Activated CD8-positive, alpha-beta T cell treated with anti-CD3 and anti-CD28 coated beads for 36 hours (primary cell): ENCODE measurements at regions of chr1 and their contacts with region 1.

Region 1: DNA sequence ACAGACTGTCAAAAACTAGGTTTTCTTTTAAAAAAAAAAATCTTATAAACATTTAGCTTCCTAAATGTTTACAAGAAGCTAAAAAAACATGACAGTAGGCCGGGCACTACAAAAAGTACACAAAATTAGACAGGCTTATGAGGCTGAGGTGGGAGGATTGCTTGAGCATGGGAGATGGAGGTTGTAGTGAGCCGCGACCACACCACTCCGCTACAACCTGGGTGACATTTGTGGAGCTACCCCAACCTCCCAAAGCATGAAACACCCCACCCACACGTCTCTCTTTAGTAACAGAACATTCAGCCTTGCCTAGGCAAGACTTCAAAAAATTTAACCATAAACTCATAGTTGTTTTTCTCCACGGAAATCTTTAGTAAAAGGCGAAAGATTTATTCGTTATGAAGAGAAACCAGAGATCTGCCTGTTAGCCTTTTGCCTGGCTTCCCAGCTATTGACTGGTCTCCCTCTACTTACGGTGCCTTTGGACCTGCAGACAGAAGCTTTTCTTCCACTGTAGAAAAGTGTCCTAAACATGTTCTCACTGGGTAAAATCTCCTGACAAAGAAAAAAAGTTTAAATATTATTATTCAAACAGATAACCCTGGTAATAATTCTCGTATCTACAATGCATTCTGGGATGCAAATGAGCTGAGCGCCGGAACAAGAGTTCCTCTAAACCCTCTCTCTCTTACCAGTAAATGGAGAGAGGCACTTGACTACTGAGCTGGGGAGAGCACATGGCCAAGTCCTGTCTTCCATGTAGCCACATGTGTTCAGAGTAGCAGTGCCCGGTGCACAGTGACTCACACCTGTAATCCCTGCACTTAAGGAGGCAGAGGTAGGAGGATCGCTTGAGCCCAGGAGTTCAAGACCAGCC is 9.2 kb downstream of the RNU5D-1 start:
- DNase-seq: peak; percentile 95
- ATAC-seq: peak; percentile 78
- H3K4me3 Mint-ChIP-seq: peak overlapping the region; percentile 72
- H3K27ac Mint-ChIP-seq: peak overlapping the region; percentile 92
- H3K4me1 Mint-ChIP-seq: peaks cover 74% of the 10 kb centered on the region
- H3K27me3 Mint-ChIP-seq: peaks cover 4% of the 10 kb centered on the region
- CTCF ChIP-seq: no peak

Region 2: DNA sequence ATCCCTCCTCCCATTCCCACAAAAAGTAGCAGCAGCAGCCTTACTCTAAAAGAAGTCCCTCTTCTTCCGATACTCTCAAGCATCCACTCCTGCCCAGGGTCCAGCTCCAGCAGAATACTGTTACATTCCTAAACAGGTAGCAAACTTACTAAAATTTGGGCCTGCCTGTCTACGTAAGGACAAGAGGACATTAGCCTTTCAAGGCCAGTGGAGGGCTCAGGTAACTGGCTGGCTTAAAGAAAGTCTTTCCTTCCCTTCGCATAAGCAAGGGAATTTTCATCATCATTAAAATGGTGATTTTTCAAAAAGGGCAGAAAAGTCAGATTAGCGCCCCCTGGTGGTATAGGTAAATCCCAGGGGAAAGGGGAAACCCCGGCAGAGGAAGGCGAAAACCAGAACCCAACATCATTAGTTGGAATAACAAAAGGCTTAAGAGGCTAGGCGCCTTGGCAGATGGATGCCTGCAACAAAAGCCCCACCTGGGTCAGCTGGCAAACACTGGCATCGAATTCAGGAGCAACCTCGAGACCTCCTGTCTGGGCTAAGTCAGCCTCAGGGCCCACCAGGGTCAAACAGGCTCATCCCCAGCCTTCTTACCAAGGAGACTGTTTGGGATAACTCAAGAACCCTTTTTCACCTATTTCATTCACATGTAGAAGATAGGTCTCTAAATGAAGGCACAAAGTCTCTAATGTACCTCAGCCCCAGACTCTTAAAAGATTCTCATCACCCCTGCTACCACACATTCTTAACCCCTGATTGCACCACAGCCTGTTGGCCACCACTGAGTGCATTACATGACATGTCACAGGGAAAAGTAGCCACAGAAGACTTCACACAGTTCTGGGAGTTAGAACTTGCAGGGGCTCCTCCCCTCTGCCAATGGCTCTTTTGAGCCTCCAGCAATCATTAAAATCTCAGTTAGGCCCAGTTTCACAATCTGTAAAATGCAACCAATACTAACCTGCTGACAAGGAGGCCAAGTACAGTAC is 403.3 kb before region 1 on chr1:
- CTCF ChIA-PET with region 1: no interaction called
- POLR2A ChIA-PET with region 1: no interaction called
- intact Hi-C with region 1: no loop called
- DNase-seq: peak; percentile 61
- ATAC-seq: no peak
- H3K4me3 Mint-ChIP-seq: no peak overlapping the region
- H3K27ac Mint-ChIP-seq: no peak overlapping the region
- H3K4me1 Mint-ChIP-seq: no peaks in the 10 kb centered on the region
- H3K27me3 Mint-ChIP-seq: no peaks in the 10 kb centered on the region
- CTCF ChIP-seq: peak; percentile 97

Region 3: DNA sequence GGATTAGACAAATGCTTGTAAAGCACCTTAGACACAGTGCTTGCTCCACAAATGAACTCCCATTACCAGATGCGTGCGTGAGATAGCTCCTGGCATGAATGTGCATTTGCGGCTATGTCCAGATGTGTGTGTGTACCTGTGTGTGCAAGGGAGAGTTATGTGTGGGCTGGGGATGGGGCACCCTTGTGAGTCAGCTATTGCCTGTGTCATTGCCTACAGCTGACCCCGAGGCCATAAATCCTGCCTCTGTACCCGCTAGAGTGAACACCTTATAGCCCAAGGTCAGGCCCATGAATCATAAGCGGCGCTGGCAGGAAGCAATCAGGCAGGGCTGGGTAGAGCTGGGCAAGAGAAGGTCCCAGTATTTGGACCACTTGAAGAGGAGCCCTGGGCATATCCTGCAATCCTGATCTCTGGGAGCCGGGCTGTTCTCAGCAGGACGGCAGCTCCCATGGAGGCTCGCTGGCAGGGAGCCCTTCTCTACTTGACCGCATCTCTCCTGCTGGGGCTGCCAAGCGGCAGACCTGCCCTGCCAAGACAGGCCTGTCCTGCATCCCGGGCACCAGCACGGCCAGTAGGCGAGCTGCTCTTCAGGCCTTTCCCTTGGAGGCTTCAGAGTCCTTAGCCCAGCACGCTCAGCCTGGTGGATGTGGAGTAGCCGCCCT is 133.8 kb before region 1 on chr1:
- CTCF ChIA-PET with region 1: no interaction called
- POLR2A ChIA-PET with region 1: no interaction called
- intact Hi-C with region 1: no loop called
- DNase-seq: no peak
- ATAC-seq: no peak
- H3K4me3 Mint-ChIP-seq: no peak overlapping the region
- H3K27ac Mint-ChIP-seq: no peak overlapping the region
- H3K4me1 Mint-ChIP-seq: no peaks in the 10 kb centered on the region
- H3K27me3 Mint-ChIP-seq: no peaks in the 10 kb centered on the region
- CTCF ChIP-seq: no peak

Region 4: DNA sequence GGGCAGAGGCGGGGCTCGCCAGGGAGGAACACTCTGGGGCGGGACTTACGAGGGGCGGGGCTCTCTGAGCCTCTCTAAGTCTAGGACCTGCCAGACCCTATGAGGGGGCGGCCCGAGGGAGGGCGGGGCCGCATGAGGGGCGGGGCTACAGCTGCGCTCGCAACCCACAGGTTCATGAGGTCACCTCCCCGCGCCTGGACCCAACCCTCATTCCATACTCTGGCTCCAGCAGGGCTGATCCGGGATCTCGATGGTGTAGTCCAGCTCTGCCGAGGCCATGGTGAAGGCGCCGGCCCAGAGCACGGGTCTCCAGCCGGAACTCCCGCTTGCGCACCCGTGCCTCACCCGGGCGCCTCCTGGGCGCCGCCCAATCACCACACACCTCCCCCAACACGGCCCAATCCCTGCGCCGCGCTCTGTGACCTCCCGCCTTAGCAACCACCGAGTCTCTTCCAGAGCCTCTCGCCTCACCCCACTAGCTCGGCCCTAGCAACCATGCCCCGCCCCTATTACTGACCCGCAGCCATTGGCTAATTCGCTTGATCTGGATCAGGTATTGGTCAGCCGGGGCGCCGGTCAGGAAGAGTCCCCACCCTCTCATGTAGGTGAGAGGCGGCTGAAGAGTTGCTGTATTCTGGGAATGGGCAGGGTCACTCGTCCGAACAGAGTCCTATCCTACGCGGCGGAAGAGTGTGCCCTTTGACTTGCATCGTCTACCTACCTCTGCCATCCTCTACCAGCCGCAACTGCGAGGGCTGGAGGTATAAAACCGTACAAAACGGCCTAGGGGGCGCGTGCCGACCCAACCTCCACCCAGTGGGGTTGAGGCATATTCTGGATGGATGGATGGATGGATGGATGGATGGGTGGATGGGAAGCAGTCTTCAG is 47.4 kb before region 1 on chr1 and contains the starts of genes ARMH1 and TMEM53:
- CTCF ChIA-PET with region 1: no interaction called
- POLR2A ChIA-PET with region 1: interaction called, 38 read pairs
- intact Hi-C with region 1: no loop called
- DNase-seq: peak; percentile 99
- ATAC-seq: peak; percentile 95
- H3K4me3 Mint-ChIP-seq: peak within 1 kb of the TSS; percentile 81
- H3K27ac Mint-ChIP-seq: peak within 1 kb of the TSS; percentile 89
- H3K4me1 Mint-ChIP-seq: peaks cover 20% of the 10 kb centered on the region
- H3K27me3 Mint-ChIP-seq: no peaks in the 10 kb centered on the region
- CTCF ChIP-seq: no peak
- total RNA-seq, gene ARMH1: 162 to 165 TPM
- total RNA-seq, gene TMEM53: 2.3 to 3.5 TPM

Region 5: GRCh38 chr1:44739361-44740178 is 17.8 kb after region 1 on chr1 and contains the start of gene KIF2C:
- CTCF ChIA-PET with region 1: interaction called, 3 read pairs
- POLR2A ChIA-PET with region 1: interaction called, 553 read pairs
- intact Hi-C with region 1: no loop called
- DNase-seq: peak; percentile 99
- ATAC-seq: peak; percentile 99
- H3K4me3 Mint-ChIP-seq: peak within 1 kb of the TSS; percentile 97
- H3K27ac Mint-ChIP-seq: peak within 1 kb of the TSS; percentile 90
- H3K4me1 Mint-ChIP-seq: peaks cover 15% of the 10 kb centered on the region
- H3K27me3 Mint-ChIP-seq: no peaks in the 10 kb centered on the region
- CTCF ChIP-seq: no peak
- total RNA-seq, gene KIF2C: 92.6 to 95.0 TPM

Region 6: GRCh38 chr1:44780583-44781121 is 58.9 kb after region 1 on chr1:
- CTCF ChIA-PET with region 1: interaction called, 3 read pairs
- POLR2A ChIA-PET with region 1: interaction called, 108 read pairs
- intact Hi-C with region 1: no loop called
- DNase-seq: no peak
- ATAC-seq: no peak
- H3K4me3 Mint-ChIP-seq: no peak overlapping the region
- H3K27ac Mint-ChIP-seq: no peak overlapping the region
- H3K4me1 Mint-ChIP-seq: peaks cover 57% of the 10 kb centered on the region
- H3K27me3 Mint-ChIP-seq: no peaks in the 10 kb centered on the region
- CTCF ChIP-seq: no peak

Region 7: DNA sequence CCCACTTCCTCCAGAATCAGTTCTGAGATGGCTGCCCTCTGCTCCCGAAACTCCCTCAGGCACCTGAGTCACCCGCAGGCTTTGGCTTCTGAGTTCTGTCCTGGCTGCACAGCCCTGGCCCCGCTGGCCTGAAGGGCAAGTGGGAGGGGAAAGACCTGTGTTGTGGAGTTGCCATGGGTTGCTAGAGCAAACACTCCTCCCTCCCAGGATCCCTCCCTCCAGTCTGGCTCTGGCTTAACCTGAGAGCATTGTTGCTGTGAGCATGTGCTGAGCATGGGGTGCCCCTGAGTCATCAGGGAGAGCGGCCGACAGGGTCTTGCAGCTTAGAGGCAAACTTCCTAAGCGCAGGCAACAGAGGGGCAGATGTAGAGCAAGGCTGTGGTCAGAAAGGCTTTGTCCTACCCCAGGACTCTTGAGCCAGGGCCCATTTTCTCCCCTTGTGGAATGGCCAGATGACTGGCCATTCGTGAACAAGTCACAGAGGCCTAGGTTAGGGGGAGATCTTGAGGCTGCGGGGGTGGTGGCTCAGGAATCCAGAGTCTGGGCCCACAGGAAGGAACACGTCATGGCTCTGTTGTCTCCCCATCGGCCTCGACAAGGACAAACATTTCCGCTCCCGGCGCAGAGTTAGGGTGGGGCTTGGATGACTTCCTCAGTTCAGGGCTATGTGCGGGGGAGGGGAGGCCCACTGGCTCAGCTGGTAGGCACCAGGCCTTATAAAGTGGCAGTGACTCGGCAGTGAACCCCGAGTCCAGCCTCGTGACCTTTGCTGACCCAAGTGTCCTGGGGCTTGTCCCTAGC is 85.7 kb after region 1 on chr1 and contains the start of gene DYNLT4:
- CTCF ChIA-PET with region 1: interaction called, 5 read pairs
- POLR2A ChIA-PET with region 1: interaction called, 213 read pairs
- intact Hi-C with region 1: no loop called
- DNase-seq: peak; percentile 97
- ATAC-seq: peak; percentile 59
- H3K4me3 Mint-ChIP-seq: peak within 1 kb of the TSS; percentile 55
- H3K27ac Mint-ChIP-seq: peak within 1 kb of the TSS; percentile 99
- H3K4me1 Mint-ChIP-seq: peaks cover 89% of the 10 kb centered on the region
- H3K27me3 Mint-ChIP-seq: no peaks in the 10 kb centered on the region
- CTCF ChIP-seq: no peak
- total RNA-seq, gene DYNLT4: 0.36 to 1.1 TPM

Region 8: DNA sequence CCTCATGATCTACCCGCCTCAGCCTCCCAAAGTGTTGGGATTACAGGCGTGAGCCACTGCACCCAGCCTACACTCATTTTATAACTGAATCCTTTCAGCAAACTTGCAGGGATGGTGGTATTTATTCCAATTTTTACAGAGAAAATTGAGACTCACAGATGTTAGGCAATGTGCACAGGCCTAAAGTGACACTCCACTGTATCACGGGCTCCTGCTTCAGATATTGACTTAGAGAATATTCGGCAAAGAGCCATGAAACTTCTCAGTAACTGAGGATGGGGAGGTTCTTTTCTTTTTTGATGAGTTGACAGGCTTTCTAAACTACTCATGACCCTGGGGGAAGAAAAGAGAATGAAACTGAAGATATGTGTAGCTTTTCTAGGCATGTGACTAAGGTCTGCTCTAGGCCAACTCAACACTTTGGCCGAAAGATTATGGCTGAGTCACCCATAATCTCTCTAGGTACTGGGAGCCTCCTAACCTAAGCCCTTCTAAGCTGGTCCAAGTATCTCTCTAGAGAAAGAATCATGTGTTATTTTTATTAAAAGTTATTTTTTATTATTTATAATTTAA is 141.2 kb after region 1 on chr1:
- CTCF ChIA-PET with region 1: no interaction called
- POLR2A ChIA-PET with region 1: no interaction called
- intact Hi-C with region 1: no loop called
- DNase-seq: no peak
- ATAC-seq: no peak
- H3K4me3 Mint-ChIP-seq: no peak overlapping the region
- H3K27ac Mint-ChIP-seq: no peak overlapping the region
- H3K4me1 Mint-ChIP-seq: no peaks in the 10 kb centered on the region
- H3K27me3 Mint-ChIP-seq: no peaks in the 10 kb centered on the region
- CTCF ChIP-seq: no peak

Region 9: GRCh38 chr1:44985747-44986359 is 264.1 kb after region 1 on chr1:
- CTCF ChIA-PET with region 1: interaction called, 3 read pairs
- POLR2A ChIA-PET with region 1: interaction called, 11 read pairs
- intact Hi-C with region 1: no loop called
- DNase-seq: no peak
- ATAC-seq: peak; percentile 2
- H3K4me3 Mint-ChIP-seq: peak overlapping the region; percentile 100
- H3K27ac Mint-ChIP-seq: peak overlapping the region; percentile 93
- H3K4me1 Mint-ChIP-seq: peaks cover 21% of the 10 kb centered on the region
- H3K27me3 Mint-ChIP-seq: no peaks in the 10 kb centered on the region
- CTCF ChIP-seq: no peak